ENCODE measurements at regions of chr1 and their contacts with region 1.

Region 1: DNA sequence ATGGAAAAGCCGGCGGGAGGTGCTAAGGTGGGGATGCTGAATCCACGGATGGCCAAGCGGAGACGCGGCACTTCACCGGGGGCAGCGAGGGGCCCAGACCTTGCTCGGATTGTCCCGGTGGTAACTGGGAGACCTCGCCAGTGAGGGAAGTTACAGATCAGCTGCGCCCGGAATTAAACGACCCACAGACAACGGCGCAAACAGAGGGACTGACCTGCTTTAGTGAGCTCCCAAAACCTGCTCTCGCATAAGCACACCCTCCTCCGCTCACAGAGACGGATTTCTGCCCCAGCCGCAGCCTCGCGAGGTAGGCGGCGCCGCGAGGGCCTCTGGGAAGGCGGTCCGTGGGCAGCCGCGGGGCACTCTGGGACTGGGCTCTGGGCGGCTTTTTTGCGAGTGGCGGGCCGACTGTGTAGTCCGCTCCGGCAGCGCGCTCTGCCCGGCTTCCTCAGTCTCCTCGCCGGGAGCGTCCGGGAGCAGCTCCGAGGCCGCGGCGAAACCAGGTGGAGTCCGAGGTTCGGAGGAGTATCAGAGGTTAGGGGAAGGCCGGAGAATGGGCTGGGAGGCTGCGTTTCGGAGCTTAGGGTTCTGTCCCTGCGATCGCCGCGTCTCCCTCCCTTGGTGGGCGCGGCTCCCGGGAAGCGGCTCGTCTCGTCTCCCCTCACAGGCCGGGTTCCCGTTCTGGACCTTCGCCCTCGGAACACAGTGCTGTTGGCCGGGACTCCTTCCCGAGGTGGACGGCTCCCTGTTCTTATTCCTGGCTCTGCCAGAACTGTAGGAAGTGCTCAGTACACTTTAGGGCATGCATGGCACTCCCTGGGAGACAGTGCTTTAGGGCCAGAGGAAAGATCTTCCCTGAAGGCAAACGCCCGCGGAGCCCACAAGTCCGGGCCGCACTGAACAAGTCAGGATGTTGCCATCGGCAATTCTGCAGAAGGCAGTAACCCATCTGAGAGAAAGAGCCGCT is at the start of gene EXO5:
- DNase-seq: peak; percentile 92
- H3K4me3 Mint-ChIP-seq: peak within 1 kb of the TSS; percentile 77
- H3K27ac Mint-ChIP-seq: peak within 1 kb of the TSS; percentile 78
- H3K4me1 Mint-ChIP-seq: peaks cover 11% of the 10 kb centered on the region
- H3K27me3 Mint-ChIP-seq: no peaks in the 10 kb centered on the region
- total RNA-seq, gene EXO5: 9.7 to 11.7 TPM

Region 2: DNA sequence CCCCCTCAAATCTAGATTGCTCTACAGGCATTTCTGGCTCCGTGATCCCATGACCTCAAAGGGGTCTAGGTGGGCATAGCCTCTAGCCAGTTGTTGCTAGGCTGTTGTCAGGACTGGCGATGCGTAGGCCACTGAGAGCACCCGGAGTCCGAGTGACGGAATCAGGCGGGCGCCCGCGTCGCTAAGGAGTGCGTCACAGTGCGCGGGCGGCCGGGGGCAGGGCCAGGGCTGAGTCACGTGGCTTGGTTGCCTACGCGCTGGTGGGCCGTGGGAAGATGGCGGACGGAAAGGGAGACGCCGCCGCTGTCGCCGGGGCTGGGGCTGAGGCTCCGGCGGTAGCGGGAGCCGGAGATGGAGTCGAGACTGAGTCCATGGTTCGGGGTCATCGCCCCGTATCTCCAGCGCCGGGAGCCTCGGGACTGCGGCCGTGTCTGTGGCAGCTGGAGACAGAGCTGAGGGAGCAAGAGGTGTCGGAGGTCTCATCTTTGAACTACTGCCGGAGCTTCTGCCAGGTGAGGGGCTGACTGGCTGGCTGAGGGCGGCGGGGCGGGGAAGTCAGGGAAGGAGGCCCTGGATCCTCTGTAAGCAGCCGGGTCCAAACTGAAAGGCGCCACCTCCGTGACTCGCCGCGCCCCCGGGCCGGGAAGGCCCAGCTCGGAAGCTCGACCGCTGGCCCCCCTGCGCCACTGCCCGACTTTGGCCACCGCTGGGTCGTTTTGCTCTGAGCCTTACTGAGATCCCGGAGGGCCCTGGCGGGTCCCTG is 347.4 kb before region 1 on chr1 and contains the start of gene RLF:
- CTCF ChIA-PET with region 1: no interaction called
- POLR2A ChIA-PET with region 1: no interaction called
- intact Hi-C with region 1: no loop called
- DNase-seq: peak; percentile 97
- H3K4me3 Mint-ChIP-seq: no peak within 1 kb of the TSS
- H3K27ac Mint-ChIP-seq: no peak within 1 kb of the TSS
- H3K4me1 Mint-ChIP-seq: peaks cover 4% of the 10 kb centered on the region
- H3K27me3 Mint-ChIP-seq: no peaks in the 10 kb centered on the region
- total RNA-seq, gene RLF: 19.6 to 19.7 TPM

Region 3: DNA sequence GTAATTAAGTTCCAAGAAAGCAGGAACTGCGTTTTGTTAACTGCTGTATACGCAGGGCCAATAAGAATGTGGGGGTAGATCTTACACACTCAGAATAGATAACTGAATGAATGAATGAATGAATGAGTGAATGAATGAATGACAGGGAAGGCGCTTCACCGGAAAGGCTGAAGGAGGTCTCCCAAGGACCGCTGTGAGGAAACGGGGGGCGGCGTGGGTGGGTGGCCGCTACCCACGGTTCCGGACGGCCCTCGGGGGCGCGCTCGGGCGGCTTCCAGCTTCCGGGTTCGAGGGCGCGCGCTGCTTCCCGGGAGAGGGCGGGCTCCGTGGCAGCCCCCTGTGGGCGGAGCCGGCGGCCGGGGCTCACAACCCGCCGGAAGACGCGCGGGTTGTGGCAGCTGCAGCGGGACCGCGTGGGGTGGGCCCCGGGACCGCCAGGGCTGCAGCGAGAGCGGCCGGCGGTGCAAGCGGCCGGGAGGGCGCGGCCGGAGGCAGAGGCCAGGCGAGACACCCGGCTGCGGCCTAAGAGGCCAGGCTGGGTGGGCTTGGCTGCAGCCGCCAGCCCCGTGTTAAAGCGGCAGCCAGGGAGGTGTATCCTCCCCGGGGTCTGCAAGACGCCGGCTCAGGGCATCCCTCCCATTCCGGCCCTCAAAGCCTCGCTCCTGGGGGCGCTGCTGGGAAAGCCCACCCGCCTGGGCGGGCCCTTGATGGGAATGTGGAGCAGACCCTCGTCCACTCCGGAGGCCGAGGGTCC is 31.6 kb before region 1 on chr1 and contains the start of gene ZFP69:
- CTCF ChIA-PET with region 1: no interaction called
- POLR2A ChIA-PET with region 1: no interaction called
- intact Hi-C with region 1: loop called (anchors 2 kb)
- DNase-seq: peak; percentile 77
- H3K4me3 Mint-ChIP-seq: peak within 1 kb of the TSS; percentile 78
- H3K27ac Mint-ChIP-seq: peak within 1 kb of the TSS; percentile 65
- H3K4me1 Mint-ChIP-seq: peaks cover 19% of the 10 kb centered on the region
- H3K27me3 Mint-ChIP-seq: no peaks in the 10 kb centered on the region
- total RNA-seq, gene ZFP69: 3.9 to 4.5 TPM